ENCODE measurements at regions of chr13 and their contacts with region 1.

Region 1: GRCh38 chr13:99053636-99054233 is 75.9 kb upstream of the DOCK9 start:
- DNase-seq: no peak
- ATAC-seq: peak; percentile 63
- H3K4me3 Mint-ChIP-seq: peak overlapping the region; percentile 44
- H3K27ac Mint-ChIP-seq: peak overlapping the region; percentile 89
- H3K4me1 Mint-ChIP-seq: peaks cover 74% of the 10 kb centered on the region
- H3K27me3 Mint-ChIP-seq: no peaks in the 10 kb centered on the region

Region 2: GRCh38 chr13:99067160-99067985 is 13.6 kb after region 1 on chr13:
- CTCF ChIA-PET with region 1: interaction called, 15 read pairs
- POLR2A ChIA-PET with region 1: no interaction called
- DNase-seq: no peak
- ATAC-seq: no peak
- H3K4me3 Mint-ChIP-seq: no peak overlapping the region
- H3K27ac Mint-ChIP-seq: peak overlapping the region; percentile 73
- H3K4me1 Mint-ChIP-seq: peaks cover 65% of the 10 kb centered on the region
- H3K27me3 Mint-ChIP-seq: no peaks in the 10 kb centered on the region